GM12878 (cell line): ENCODE measurements at regions of chrX and their contacts with region 1.

Region 1: GRCh38 chrX:81957900-81958545 is 756.1 kb downstream of the SH3BGRL start:
- DNase-seq: no peak
- ATAC-seq: peak; percentile 84
- H3K4me3 ChIP-seq: no peak overlapping the region
- H3K27ac ChIP-seq: no peak overlapping the region
- H3K4me1 ChIP-seq: no peaks in the 10 kb centered on the region
- H3K27me3 ChIP-seq: no peaks in the 10 kb centered on the region
- CTCF ChIP-seq: peak; percentile 39 to 49 (median 40); a peak in 5 of 6 replicates
- EP300 ChIP-seq: no peak
- POLR2A ChIP-seq: no peak
- RAD21 ChIP-seq: peak; percentile 49

Region 2: GRCh38 chrX:81367291-81367690 is 590.7 kb before region 1 on chrX:
- CTCF ChIA-PET with region 1: no interaction called
- POLR2A ChIA-PET with region 1: no interaction called
- RAD21 ChIA-PET with region 1: no interaction called
- SMC1A ChIA-PET with region 1: no interaction called
- in situ Hi-C with region 1: no loop called
- intact Hi-C with region 1: no loop called
- DNase-seq: no peak
- ATAC-seq: no peak
- H3K4me3 ChIP-seq: no peak overlapping the region
- H3K27ac ChIP-seq: no peak overlapping the region
- H3K4me1 ChIP-seq: no peaks in the 10 kb centered on the region
- H3K27me3 ChIP-seq: no peaks in the 10 kb centered on the region
- CTCF ChIP-seq: no peak
- EP300 ChIP-seq: no peak
- POLR2A ChIP-seq: no peak
- RAD21 ChIP-seq: no peak

Region 3: DNA sequence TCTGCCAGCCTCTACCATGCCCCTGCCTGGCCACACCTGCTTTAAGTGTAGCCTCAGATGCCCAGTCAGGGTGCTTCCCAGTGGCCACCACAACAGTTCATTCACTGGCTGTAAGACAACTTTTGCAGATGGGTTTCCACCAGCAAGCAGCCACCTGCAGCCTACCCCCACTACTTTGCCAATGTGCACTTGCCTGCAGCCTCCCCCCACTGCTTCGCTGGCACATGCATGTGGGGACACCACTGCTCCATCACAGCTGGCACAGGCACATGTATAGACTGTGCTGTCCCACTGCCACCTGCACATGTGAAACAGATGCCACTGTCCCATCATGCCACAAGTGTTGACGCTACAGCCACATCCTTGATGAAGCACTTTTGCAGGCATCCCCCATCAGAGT is 32.2 kb before region 1 on chrX:
- CTCF ChIA-PET with region 1: no interaction called
- POLR2A ChIA-PET with region 1: no interaction called
- RAD21 ChIA-PET with region 1: no interaction called
- SMC1A ChIA-PET with region 1: no interaction called
- in situ Hi-C with region 1: no loop called
- intact Hi-C with region 1: no loop called
- DNase-seq: no peak
- ATAC-seq: no peak
- H3K4me3 ChIP-seq: no peak overlapping the region
- H3K27ac ChIP-seq: no peak overlapping the region
- H3K4me1 ChIP-seq: no peaks in the 10 kb centered on the region
- H3K27me3 ChIP-seq: no peaks in the 10 kb centered on the region
- CTCF ChIP-seq: no peak
- EP300 ChIP-seq: no peak
- POLR2A ChIP-seq: no peak
- RAD21 ChIP-seq: no peak

Region 4: DNA sequence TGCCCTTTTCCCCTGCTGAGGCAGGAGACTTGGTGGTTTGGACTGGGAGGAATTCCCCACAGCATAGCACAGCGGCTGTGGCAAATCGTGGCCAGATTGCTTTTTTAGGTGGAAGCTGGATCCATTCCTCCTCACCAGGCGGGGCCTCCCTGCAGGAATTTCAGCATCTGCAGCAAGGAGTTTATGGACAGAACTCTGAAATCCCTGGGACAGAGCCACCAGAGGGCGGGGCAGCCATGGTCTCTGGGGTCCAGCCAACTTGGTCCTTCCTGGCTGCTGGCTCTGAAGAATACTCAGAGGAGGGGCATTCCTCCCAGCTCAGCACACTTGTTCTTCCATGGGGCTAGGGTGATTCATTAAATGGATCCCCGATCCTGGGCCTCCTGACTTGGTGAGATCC is 38.1 kb after region 1 on chrX:
- CTCF ChIA-PET with region 1: no interaction called
- POLR2A ChIA-PET with region 1: no interaction called
- RAD21 ChIA-PET with region 1: no interaction called
- SMC1A ChIA-PET with region 1: no interaction called
- in situ Hi-C with region 1: no loop called
- intact Hi-C with region 1: no loop called
- DNase-seq: no peak
- ATAC-seq: no peak
- H3K4me3 ChIP-seq: no peak overlapping the region
- H3K27ac ChIP-seq: no peak overlapping the region
- H3K4me1 ChIP-seq: no peaks in the 10 kb centered on the region
- H3K27me3 ChIP-seq: no peaks in the 10 kb centered on the region
- CTCF ChIP-seq: no peak
- EP300 ChIP-seq: no peak
- POLR2A ChIP-seq: no peak
- RAD21 ChIP-seq: no peak

Region 5: GRCh38 chrX:82676386-82676785 is 718.4 kb after region 1 on chrX:
- CTCF ChIA-PET with region 1: interaction called, 7 read pairs
- POLR2A ChIA-PET with region 1: no interaction called
- RAD21 ChIA-PET with region 1: interaction called, 8 read pairs
- SMC1A ChIA-PET with region 1: interaction called, 3 read pairs
- in situ Hi-C with region 1: no loop called
- intact Hi-C with region 1: loop called (anchors 10 kb)
- DNase-seq: no peak
- ATAC-seq: peak; percentile 38; the same call in 2 of the 3 replicates
- H3K4me3 ChIP-seq: no peak overlapping the region
- H3K27ac ChIP-seq: no peak overlapping the region
- H3K4me1 ChIP-seq: no peaks in the 10 kb centered on the region
- H3K27me3 ChIP-seq: no peaks in the 10 kb centered on the region
- CTCF ChIP-seq: peak in 1 of 3 experiments; percentile 21; a peak in 2 of 6 replicates
- EP300 ChIP-seq: no peak
- POLR2A ChIP-seq: no peak
- RAD21 ChIP-seq: peak; percentile 25; the same call in 1 of the 2 replicates